Activated CD8-positive, alpha-beta memory T cell treated with anti-CD3 and anti-CD28 coated beads, Interleukin-2, amount 10 ng/mL, durations not matched to agents 7 days and 5 days (primary cell): ENCODE measurements at regions of chr3 and their contacts with region 1.

Region 1: DNA sequence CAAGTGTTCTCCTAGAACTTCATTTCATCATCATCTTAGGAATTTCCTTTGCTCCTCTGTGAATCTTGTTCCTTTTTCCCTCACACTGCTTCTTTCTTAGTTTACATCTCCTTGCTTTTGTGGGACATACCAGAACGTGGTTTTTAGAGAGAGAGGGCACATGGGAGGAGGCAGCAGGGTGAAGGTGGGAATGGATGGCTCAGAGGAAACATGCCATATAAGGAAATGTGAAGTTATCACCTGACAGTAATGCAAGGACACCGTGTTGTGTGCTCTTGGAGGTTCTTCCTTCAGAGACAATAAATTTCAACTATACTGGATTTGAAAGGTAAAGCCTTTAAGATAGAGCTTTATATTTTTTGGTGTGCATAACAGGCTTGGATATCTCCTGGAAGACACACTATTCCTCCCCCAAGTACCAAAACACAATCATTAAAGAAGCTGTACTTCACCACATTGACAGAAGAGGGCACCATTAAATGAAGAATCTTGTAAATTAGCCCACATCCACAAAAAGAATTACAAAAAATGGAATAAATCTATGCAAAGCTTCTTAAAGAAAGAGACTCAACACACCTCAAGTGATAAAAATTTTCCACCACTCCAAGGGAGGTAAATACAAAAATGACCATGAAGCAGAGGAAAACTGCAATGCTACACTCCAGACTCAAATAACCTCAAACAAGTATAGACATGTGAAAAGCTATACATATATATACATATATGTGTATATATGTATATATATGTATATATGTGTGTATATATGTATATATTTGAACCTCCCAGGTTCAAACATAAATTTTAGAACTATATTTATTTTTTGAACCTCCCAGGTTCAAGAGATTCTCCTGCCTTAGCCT is 26.1 kb downstream of the RPL39L start:
- DNase-seq: no peak
- ATAC-seq: peak; percentile 45
- H3K4me3 Mint-ChIP-seq: no peak overlapping the region
- H3K27ac Mint-ChIP-seq: no peak overlapping the region
- H3K4me1 Mint-ChIP-seq: peaks cover 7% of the 10 kb centered on the region
- H3K27me3 Mint-ChIP-seq: no peaks in the 10 kb centered on the region

Region 2: DNA sequence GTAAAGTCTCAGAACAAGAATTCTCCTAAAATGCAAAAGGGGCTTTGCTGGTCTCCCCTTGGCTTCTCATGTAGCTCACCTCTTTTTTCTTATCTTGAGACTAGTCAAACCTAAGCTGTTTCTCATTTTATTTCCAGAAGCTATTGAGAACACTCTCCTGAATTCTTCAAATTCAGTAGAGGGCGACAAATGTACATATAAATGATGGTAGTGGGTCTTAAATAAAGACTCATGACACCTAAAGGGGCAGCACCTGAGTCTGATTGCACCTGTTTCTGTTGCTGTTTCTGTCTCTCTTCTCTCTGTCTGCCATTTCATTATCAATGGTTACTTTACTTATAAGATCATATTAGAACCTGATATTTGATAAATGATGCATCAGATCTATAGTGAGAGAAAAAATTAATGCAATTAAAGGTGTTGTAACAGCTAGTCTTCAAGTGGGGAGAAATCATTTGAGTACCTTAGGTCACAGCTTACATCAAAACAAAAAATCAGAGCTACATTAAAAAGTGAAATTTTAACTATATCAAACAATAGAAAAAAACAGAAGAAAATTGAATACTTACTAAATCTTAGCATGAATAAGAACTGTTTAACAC is 263.7 kb before region 1 on chr3:
- CTCF ChIA-PET with region 1: interaction called, 13 read pairs
- DNase-seq: no peak
- ATAC-seq: peak; percentile 90
- H3K4me3 Mint-ChIP-seq: no peak overlapping the region
- H3K27ac Mint-ChIP-seq: no peak overlapping the region
- H3K4me1 Mint-ChIP-seq: peaks cover 11% of the 10 kb centered on the region
- H3K27me3 Mint-ChIP-seq: peaks cover 14% of the 10 kb centered on the region

Region 3: GRCh38 chr3:186974824-186975313 is 138.3 kb before region 1 on chr3:
- CTCF ChIA-PET with region 1: no interaction called
- DNase-seq: no peak
- ATAC-seq: no peak
- H3K4me3 Mint-ChIP-seq: no peak overlapping the region
- H3K27ac Mint-ChIP-seq: peak overlapping the region; percentile 42
- H3K4me1 Mint-ChIP-seq: peaks cover 14% of the 10 kb centered on the region
- H3K27me3 Mint-ChIP-seq: no peaks in the 10 kb centered on the region

Region 4: DNA sequence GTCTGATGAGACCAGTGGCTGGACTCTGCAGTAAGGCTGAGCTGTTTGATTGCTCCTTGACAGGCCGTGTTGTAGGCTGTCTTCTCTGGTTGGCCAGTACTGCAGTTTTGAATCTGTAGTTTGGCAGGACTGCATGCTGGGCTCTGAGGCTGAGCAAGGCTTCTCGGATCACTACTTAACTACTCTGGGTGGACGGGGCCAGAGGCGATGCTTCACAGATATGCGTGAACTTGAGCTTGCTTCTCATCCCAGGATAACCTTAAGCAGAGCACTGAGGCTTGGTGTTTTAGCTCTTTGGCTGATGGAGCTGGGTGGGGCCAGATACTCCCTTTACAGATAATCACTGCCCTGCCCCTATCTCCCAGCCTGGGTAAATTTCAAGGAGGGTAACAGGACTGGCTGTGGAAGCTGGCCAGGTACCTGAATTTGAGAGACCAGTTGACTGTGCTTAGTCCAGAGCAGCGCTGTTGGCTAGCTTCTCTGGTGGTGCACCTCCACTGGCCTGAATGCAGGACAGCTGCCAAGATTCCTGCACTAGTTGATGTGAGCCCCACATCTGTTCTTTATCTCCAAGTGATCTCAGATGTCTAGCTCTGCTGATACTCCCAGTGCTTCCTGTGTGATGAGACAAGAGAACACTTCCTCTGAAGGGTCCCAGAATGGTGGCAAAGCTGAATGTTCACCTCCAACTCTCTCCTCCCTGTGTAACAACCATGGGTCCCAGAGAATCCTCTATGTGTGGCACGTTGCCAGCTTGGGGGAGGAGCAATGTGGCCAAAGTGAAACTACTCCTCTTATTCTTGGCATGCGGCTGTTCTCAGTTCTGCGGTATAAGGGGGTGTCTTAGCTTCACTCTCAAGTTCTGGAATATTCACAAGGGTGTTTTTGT is 11.7 kb before region 1 on chr3:
- CTCF ChIA-PET with region 1: interaction called, 28 read pairs
- DNase-seq: peak; percentile 71
- ATAC-seq: peak; percentile 81
- H3K4me3 Mint-ChIP-seq: peak overlapping the region; percentile 52
- H3K27ac Mint-ChIP-seq: peak overlapping the region; percentile 52
- H3K4me1 Mint-ChIP-seq: peaks cover 52% of the 10 kb centered on the region
- H3K27me3 Mint-ChIP-seq: peaks cover 2% of the 10 kb centered on the region

Region 5: DNA sequence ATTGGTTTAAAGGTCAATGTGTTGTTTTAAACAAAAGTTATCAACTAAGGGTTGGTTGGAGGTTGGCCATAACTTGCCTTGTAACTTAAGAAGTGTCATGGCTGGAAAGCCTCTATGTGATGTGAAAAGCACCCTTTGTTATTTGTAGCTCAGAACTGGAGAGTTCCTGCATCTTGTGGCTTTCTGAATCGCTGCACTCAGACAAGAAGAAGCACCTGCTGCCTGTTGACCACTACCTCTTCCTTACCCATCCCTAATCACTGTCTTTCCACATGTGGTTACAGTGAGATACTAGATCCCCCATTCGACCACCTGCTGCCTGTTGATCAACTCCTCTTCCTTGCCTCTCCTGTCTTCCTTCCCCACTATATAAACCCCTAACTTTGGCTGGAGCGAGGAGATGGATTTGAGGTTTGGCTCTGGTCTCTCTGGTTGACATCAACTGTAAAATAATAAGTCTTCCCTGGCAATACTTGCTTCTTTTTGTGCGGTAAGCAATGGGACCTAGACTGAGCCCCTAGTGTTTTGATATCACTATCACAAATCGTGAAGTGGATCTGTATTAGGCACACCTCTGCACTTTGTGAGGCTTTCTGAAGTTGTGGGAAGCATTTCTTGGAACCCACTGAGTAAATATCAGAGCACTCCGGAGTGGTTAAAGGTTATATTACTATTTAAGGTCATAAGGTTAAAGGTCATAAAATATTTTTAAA is 12.3 kb after region 1 on chr3:
- CTCF ChIA-PET with region 1: interaction called, 24 read pairs
- DNase-seq: no peak
- ATAC-seq: no peak
- H3K4me3 Mint-ChIP-seq: no peak overlapping the region
- H3K27ac Mint-ChIP-seq: no peak overlapping the region
- H3K4me1 Mint-ChIP-seq: peaks cover 22% of the 10 kb centered on the region
- H3K27me3 Mint-ChIP-seq: no peaks in the 10 kb centered on the region

Region 6: GRCh38 chr3:187130346-187131066 is 17.3 kb after region 1 on chr3:
- CTCF ChIA-PET with region 1: interaction called, 10 read pairs
- DNase-seq: peak; percentile 59
- ATAC-seq: peak; percentile 99
- H3K4me3 Mint-ChIP-seq: peak overlapping the region; percentile 62
- H3K27ac Mint-ChIP-seq: peak overlapping the region; percentile 93
- H3K4me1 Mint-ChIP-seq: peaks cover 36% of the 10 kb centered on the region
- H3K27me3 Mint-ChIP-seq: no peaks in the 10 kb centered on the region

Region 7: DNA sequence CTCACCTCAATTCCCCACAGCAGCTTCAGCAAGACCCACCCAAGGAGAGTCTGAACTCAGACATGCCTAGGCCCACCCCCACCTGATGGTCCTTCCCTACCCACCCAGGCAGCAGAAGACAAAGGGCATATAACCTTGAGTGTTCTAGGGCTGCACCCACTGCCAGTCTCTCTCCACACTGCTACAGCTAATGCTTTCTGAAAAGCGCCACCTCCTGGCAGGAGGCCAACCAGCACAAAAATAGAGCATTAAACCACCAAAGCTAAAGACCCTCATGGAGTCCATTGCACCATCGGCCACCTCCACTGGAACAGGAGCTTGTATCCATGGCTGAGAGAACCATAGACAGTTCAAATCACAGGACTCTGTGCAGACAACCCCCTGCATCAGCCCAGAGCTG is 37.4 kb after region 1 on chr3:
- CTCF ChIA-PET with region 1: interaction called, 69 read pairs
- DNase-seq: peak; percentile 75
- ATAC-seq: peak; percentile 63
- H3K4me3 Mint-ChIP-seq: no peak overlapping the region
- H3K27ac Mint-ChIP-seq: no peak overlapping the region
- H3K4me1 Mint-ChIP-seq: no peaks in the 10 kb centered on the region
- H3K27me3 Mint-ChIP-seq: peaks cover 44% of the 10 kb centered on the region

Region 8: DNA sequence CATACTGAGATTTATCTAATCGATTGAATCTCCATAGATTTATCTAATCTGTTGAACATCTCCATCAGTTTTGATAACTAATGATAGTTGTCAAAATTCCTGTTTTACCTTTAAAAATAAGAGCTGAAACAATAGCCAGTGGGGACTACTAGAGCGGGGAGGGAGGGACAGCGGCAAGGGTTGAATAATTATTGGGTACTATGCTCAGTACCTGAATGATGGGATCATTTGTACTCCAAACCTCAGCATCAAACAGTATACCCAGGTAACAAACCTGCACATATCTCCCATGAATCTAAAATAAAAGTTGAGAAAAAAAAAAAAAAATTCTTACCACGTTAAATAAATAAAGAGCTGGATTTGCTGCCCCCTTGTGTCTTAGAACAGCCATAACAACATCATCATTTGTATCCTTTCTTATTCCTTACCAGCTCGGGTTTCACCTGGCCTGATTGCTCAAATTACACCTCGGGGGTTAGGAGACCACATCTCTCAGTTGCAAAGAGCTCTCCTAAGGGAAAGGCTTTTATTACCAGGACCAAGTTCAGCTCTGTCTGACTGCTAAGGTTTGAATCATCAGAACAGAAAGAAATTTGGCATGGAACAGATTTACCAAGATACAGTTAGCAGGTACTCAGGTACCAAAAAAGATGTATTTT is 51.9 kb after region 1 on chr3:
- CTCF ChIA-PET with region 1: interaction called, 118 read pairs
- DNase-seq: peak; percentile 46
- ATAC-seq: peak; percentile 70
- H3K4me3 Mint-ChIP-seq: no peak overlapping the region
- H3K27ac Mint-ChIP-seq: no peak overlapping the region
- H3K4me1 Mint-ChIP-seq: peaks cover 3% of the 10 kb centered on the region
- H3K27me3 Mint-ChIP-seq: peaks cover 40% of the 10 kb centered on the region